ENCODE measurements at regions of chr1 and their contacts with region 1.

Region 1: DNA sequence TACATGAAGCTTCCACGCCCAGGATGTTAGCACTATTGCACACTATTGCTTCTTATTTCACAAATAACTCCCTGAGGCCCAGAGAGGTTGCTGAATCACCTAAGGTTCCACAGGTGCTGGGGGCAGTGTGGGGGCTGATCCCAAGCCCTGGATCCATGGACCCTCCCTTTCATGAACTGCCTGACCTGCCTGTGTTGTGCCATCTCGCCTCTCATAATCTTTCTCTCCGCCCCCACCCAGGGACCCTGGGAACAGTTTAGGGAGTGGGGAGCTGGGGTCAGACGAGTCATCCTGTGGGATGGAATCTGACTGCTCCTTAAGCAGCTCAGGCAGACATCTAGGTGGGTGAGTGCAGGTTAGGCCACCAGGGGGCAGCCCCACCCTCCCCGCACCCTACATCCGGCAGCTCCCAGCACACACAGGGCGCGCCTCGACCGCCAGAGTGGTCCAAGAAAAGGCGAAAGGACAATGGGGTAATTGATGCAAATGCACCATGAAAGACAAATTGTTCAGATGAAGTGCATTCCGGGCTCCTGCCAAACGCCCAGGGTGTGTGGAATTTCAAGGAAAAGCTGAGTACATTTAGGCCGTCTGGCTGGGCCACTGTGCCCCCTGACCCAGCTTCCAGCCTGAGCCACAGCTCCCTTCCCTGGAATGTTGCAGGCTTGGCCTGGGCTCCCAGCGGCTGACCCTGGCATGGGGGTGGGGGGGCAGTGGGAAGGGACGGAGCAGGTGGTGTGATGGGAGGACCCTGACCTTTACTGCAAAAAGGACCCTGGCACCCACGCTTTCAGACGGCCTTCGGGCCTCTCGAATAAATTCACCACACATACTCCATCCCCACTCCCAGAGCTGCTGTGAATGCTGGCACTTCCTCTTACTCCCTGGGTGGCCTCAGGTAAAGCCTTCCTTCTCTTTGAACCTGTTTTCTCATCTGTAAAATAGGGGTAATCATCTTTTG is 20.8 kb downstream of the PHLDA3 start:
- DNase-seq: peak; percentile 81
- H3K4me3 Mint-ChIP-seq: no peak overlapping the region
- H3K27ac Mint-ChIP-seq: no peak overlapping the region
- H3K4me1 Mint-ChIP-seq: peaks cover 25% of the 10 kb centered on the region
- H3K27me3 Mint-ChIP-seq: peaks cover 63% of the 10 kb centered on the region

Region 2: DNA sequence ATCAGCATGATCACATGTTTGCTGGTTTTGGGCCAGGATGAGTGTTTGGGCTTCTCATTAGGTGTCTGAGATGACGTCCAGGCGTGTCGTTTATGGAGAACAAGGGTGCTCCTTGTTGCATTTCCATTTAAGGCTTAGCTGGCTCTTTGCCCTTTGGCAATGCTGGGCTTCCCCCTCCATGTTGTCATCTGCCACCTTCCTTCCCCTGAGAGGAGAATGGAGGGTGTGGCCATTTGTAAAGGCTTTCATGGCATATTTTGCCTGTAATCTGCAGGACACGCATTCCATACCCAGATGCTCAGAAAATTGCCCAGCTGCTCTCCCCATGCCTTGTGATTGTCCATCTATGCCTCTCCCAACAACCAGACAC is 137.2 kb before region 1 on chr1:
- CTCF ChIA-PET with region 1: no interaction called
- DNase-seq: no peak
- H3K4me3 Mint-ChIP-seq: no peak overlapping the region
- H3K27ac Mint-ChIP-seq: no peak overlapping the region
- H3K4me1 Mint-ChIP-seq: peaks cover 4% of the 10 kb centered on the region
- H3K27me3 Mint-ChIP-seq: peaks cover 53% of the 10 kb centered on the region

Region 3: DNA sequence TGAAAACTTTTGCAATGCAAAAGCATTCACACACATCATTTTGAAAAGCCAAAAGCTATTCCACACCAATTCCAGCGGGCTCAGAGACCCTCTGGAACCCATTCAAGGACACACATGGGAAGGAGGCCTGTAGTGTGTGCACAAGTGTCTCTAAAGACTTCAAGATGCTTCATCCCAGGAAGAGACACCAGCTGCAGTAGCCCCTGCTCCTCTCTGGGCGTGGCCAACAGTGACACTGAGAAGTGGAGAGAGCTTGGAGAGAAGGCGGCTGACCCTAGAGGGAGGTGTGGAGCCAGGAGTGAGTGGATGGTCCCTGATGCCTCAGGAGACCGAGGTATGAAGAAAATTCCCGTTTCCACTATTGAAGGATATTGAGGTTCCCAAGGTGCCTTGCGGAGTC is 11.8 kb before region 1 on chr1:
- CTCF ChIA-PET with region 1: interaction called, 47 read pairs
- DNase-seq: no peak
- H3K4me3 Mint-ChIP-seq: no peak overlapping the region
- H3K27ac Mint-ChIP-seq: no peak overlapping the region
- H3K4me1 Mint-ChIP-seq: peaks cover 5% of the 10 kb centered on the region
- H3K27me3 Mint-ChIP-seq: peaks cover 34% of the 10 kb centered on the region

Region 4: GRCh38 chr1:201468844-201469511 is 20.8 kb after region 1 on chr1 and contains the start of gene PHLDA3:
- CTCF ChIA-PET with region 1: interaction called, 19 read pairs
- DNase-seq: peak; percentile 80
- H3K4me3 Mint-ChIP-seq: peak within 1 kb of the TSS; percentile 86
- H3K27ac Mint-ChIP-seq: peak within 1 kb of the TSS; percentile 80
- H3K4me1 Mint-ChIP-seq: peaks cover 26% of the 10 kb centered on the region
- H3K27me3 Mint-ChIP-seq: peaks cover 65% of the 10 kb centered on the region

Region 5: GRCh38 chr1:201488817-201489589 is 40.8 kb after region 1 on chr1:
- CTCF ChIA-PET with region 1: interaction called, 15 read pairs
- DNase-seq: no peak
- H3K4me3 Mint-ChIP-seq: no peak overlapping the region
- H3K27ac Mint-ChIP-seq: no peak overlapping the region
- H3K4me1 Mint-ChIP-seq: peaks cover 16% of the 10 kb centered on the region
- H3K27me3 Mint-ChIP-seq: no peaks in the 10 kb centered on the region

Region 6: GRCh38 chr1:201500670-201501120 is 52.5 kb after region 1 on chr1:
- CTCF ChIA-PET with region 1: interaction called, 19 read pairs
- DNase-seq: no peak
- H3K4me3 Mint-ChIP-seq: no peak overlapping the region
- H3K27ac Mint-ChIP-seq: no peak overlapping the region
- H3K4me1 Mint-ChIP-seq: peaks cover 27% of the 10 kb centered on the region
- H3K27me3 Mint-ChIP-seq: no peaks in the 10 kb centered on the region

Region 7: DNA sequence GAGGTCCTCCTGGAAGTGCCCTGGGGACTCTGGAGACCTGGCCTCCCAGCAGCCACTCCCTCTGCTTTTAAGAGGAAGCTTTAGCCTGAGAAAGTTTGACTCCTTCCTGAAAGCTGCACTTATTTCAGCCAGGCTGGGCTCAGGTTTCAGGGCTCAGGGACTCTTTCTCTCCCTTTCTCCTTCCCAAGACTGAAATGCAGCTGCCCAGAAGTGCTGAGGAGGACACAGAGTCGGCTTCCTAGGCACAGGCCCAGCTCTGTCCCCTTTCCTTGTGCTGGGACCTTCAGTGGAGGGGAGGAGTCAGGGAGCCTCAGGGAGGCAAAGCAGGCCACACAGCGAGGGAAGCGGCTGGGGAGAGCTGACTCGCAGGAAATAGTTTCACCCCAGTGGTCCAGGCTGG is 228.0 kb after region 1 on chr1:
- CTCF ChIA-PET with region 1: no interaction called
- DNase-seq: no peak
- H3K4me3 Mint-ChIP-seq: no peak overlapping the region
- H3K27ac Mint-ChIP-seq: no peak overlapping the region
- H3K4me1 Mint-ChIP-seq: no peaks in the 10 kb centered on the region
- H3K27me3 Mint-ChIP-seq: peaks cover 34% of the 10 kb centered on the region

Measured in activated naive CD4-positive, alpha-beta T cell treated with anti-CD3 and anti-CD28 coated beads, Interleukin-2, amount 10 ng/mL, durations not matched to agents 7 days and 5 days (primary cell).